ENCODE measurements at regions of chr9 and their contacts with region 1.

Region 1: DNA sequence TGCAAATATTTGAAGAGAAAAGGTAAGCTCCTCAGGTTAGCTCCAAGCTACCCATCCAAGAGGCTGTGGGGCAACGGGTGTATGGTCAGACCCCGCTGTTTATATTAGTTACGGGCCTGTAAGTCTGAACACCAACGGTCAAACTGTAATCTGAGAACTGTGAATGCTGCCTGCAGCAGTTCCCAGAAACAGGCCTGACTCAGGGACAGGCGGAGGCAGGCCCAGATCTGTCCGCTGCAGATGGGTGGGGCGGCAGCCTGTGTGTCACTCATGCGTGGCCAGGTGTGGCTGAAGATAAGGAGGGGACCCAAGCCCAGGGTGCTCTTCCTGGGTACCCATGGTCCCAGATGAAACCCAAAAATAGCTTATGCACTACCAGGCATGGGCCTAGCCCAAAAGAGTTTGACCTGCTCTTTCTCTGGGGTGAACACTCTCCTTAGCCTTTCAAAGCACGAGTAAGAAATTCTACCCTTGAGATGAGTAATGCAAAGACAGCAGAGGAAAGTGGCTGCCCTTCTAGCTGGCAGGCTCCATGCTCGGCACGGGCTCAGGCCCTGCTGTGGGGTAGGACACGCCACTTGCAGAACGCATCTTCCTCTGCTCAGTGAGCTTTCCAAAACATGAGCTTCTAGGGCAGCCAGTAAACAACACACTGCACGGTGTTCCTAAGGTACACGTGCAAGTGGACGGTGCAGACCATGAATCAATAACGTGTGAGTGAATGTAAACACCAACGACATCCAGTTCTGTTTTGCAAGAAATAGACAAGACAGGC is 9.1 kb downstream of the UBAC1 start:
- DNase-seq: peak; percentile 92 to 96
- ATAC-seq: peak; percentile 64 to 69
- H3K4me3 ChIP-seq: peak overlapping the region in 1 of 4 donors; percentile 18
- H3K27ac ChIP-seq: peak overlapping the region; percentile 97 to 100 (median 100)
- H3K4me1 ChIP-seq: peaks cover 85 to 87% of the 10 kb centered on the region in 2 donors
- H3K27me3 ChIP-seq: no peaks in the 10 kb centered on the region
- CTCF ChIP-seq: peak in 1 of 5 experiments; percentile 9
- POLR2A ChIP-seq: peak; percentile 44 to 66

Region 2: DNA sequence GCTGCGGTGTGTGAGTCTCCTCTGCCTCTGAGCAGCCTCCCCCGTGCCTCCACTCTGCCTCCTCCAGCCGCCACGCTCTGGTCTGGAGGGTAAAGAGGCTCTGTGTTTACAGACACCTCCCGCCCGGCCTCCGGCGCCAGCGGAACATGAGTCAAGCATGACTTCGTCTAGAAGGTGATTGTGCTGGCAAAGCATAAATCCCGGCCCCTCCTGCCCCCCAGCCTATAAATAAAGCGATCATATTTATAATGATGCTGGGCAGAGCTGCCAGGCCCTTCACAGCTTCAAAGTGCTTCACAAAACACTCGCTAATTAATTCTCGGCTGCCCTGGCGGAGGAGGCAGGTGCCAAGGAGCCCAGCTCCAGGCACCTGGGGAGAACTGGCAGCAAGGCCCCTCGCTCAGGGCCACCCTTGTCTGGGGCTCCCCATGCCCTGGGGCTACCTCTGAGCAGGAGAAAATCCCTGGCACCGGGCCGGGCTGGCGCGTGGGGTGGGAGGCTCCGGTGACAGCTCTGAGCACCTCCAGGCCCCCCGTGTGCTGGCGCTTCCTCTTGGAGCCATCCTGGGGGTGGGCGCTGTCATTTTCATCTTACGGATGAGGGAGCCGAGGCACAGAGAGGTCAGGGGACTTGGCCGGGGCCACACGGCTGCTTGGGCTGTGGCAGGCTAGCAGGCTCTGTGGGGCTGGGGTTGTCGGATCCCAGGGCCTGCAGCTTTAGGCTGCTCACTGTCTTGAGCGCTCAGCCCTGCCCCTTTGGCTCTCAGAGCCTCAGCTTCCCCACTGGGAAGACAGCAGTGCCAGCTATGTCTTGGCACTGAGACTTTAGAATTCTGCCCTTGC is 1538.0 kb before region 1 on chr9:
- in situ Hi-C with region 1: no loop called
- intact Hi-C with region 1: loop called (anchors 5 kb)
- DNase-seq: peak; percentile 86 to 94
- ATAC-seq: peak; percentile 43 to 48
- H3K4me3 ChIP-seq: peak overlapping the region in 2 of 4 donors; percentile 19 to 23
- H3K27ac ChIP-seq: peak overlapping the region; percentile 90 to 98 (median 98)
- H3K4me1 ChIP-seq: peaks cover 81 to 87% of the 10 kb centered on the region in 2 donors
- H3K27me3 ChIP-seq: no peaks in the 10 kb centered on the region
- CTCF ChIP-seq: no peak
- POLR2A ChIP-seq: peak in 1 of 2 donors; percentile 92

Region 3: GRCh38 chr9:135926402-135927194 is 25.5 kb before region 1 on chr9:
- in situ Hi-C with region 1: no loop called
- intact Hi-C with region 1: loop called (anchors 1 kb)
- DNase-seq: peak; percentile 95 to 97
- ATAC-seq: peak; percentile 83 to 89
- H3K4me3 ChIP-seq: no peak overlapping the region
- H3K27ac ChIP-seq: peak overlapping the region; percentile 95 to 99 (median 96)
- H3K4me1 ChIP-seq: peaks cover 20 to 45% of the 10 kb centered on the region in 2 donors
- H3K27me3 ChIP-seq: no peaks in the 10 kb centered on the region
- CTCF ChIP-seq: peak in 1 of 5 experiments; percentile 30
- POLR2A ChIP-seq: peak; percentile 35 to 72

Region 4: GRCh38 chr9:136493567-136493971 is 541.5 kb after region 1 on chr9:
- in situ Hi-C with region 1: no loop called
- intact Hi-C with region 1: no loop called
- DNase-seq: no peak
- ATAC-seq: no peak
- H3K4me3 ChIP-seq: no peak overlapping the region
- H3K27ac ChIP-seq: no peak overlapping the region
- H3K4me1 ChIP-seq: no peaks in the 10 kb centered on the region
- H3K27me3 ChIP-seq: no peaks in the 10 kb centered on the region
- CTCF ChIP-seq: no peak
- POLR2A ChIP-seq: no peak

Measured in gastrocnemius medialis (tissue), 4 donors.